ENCODE measurements at regions of chr1 and their contacts with region 1.

Region 1: DNA sequence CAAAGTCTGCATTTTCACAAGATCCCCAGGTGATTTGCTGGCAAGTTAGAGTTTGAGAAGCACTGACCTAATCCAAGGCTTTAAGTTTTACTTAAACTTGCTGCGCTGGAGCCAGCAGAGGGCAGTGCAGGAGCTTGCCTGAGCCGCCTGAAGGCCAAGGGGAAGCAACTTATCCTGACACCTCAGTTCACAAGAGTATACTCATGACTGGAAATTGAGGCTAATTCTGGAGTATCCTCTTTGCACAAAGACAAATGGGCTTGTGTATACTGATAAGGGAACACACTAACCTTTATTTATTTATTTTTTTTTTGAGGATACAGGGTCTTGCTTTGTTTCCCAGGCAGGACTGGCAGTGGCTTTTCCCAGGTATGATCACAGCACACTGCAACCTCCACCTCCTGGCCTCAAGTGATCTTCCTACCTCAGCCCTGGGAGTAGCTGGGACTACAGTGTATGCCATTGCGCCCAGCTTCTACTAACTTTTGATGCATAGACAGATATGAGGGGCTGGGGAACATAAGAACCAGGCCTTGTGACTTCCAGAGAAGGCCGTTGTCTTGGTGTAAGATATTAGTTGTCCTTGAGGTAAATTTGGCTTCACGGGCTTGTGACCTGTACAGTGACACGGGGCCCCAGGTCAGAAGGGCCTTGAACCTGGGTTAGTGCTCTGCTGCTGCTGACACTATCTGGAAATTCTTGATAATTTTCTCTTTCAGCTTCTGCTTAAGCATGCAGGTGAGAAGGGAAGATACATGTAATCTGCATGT is 29.0 kb upstream of the SLAMF1 start:
- DNase-seq: peak; percentile 65 to 80 (median 68)
- H3K4me3 ChIP-seq: no peak overlapping the region
- H3K4me3 Mint-ChIP-seq: peak overlapping the region in 3 of 8 donors; percentile 18 to 64 (median 60)
- H3K27ac ChIP-seq: peak overlapping the region; percentile 47
- H3K27ac Mint-ChIP-seq: peak overlapping the region in 4 of 7 donors; percentile 30 to 94 (median 85)
- H3K4me1 ChIP-seq: peaks cover 49% of the 10 kb centered on the region
- H3K4me1 Mint-ChIP-seq: peaks cover 5 to 22% (median 19%) of the 10 kb centered on the region in 4 donors
- H3K27me3 ChIP-seq: no peaks in the 10 kb centered on the region
- H3K27me3 Mint-ChIP-seq: no peaks in the 10 kb centered on the region

Region 2: GRCh38 chr1:160428655-160429054 is 247.2 kb before region 1 on chr1:
- CTCF ChIA-PET with region 1: interaction called, 12 read pairs
- POLR2A ChIA-PET with region 1: interaction called, 3 read pairs
- intact Hi-C with region 1: no loop called
- DNase-seq: peak in 3 of 5 donors; percentile 41 to 47 (median 41)
- H3K4me3 ChIP-seq: peak overlapping the region in 1 of 2 donors; percentile 11
- H3K4me3 Mint-ChIP-seq: peak overlapping the region; percentile 10 to 74 (median 60)
- H3K27ac ChIP-seq: peak overlapping the region; percentile 57
- H3K27ac Mint-ChIP-seq: peak overlapping the region; percentile 76 to 96 (median 92)
- H3K4me1 ChIP-seq: peaks cover 68% of the 10 kb centered on the region
- H3K4me1 Mint-ChIP-seq: peaks cover 49 to 63% (median 57%) of the 10 kb centered on the region in 4 donors
- H3K27me3 ChIP-seq: no peaks in the 10 kb centered on the region
- H3K27me3 Mint-ChIP-seq: no peaks in the 10 kb centered on the region

Region 3: DNA sequence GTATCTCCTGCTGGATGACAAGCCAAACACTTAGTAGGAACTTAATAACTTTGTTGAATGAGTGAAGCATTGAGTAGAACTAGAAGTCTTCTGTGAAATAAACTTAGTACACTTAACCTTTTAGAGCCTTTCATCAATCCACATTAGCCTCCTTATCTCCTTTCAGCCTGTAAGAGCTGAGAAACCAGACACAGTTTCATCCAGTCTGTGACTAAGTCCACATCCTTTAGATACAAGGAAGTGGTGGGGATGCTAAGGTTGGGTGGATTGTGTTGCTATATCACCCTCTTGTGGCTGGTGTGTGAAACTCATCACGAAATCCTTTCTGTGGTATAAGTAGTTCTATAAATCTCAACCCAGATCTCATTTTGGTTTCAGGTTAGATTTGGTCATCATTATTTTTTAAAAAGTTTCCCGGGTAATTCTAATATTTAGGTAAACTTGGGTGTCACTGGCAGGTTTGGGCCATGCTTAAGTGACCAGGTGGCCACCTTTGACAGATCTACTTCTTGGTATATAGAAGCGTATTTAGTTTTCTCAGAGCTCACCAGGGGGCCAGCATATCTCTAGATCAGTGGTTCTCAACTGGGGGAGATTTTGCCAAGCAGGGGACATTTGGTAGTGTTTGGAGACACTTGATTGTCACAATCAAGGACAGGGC is 68.7 kb before region 1 on chr1:
- CTCF ChIA-PET with region 1: interaction called, 32 read pairs
- POLR2A ChIA-PET with region 1: interaction called, 8 read pairs
- intact Hi-C with region 1: no loop called
- DNase-seq: peak; percentile 79 to 85 (median 81)
- H3K4me3 ChIP-seq: no peak overlapping the region
- H3K4me3 Mint-ChIP-seq: peak overlapping the region in 6 of 8 donors; percentile 3 to 68 (median 37)
- H3K27ac ChIP-seq: peak overlapping the region; percentile 42
- H3K27ac Mint-ChIP-seq: peak overlapping the region; percentile 62 to 93 (median 79)
- H3K4me1 ChIP-seq: peaks cover 56% of the 10 kb centered on the region
- H3K4me1 Mint-ChIP-seq: peaks cover 42 to 62% (median 52%) of the 10 kb centered on the region in 4 donors
- H3K27me3 ChIP-seq: no peaks in the 10 kb centered on the region
- H3K27me3 Mint-ChIP-seq: no peaks in the 10 kb centered on the region

Region 4: GRCh38 chr1:160629286-160630210 is 46.3 kb before region 1 on chr1:
- CTCF ChIA-PET with region 1: interaction called, 139 read pairs
- POLR2A ChIA-PET with region 1: interaction called, 66 read pairs
- intact Hi-C with region 1: loop called (anchors 1 kb)
- DNase-seq: peak; percentile 88 to 94 (median 91)
- H3K4me3 ChIP-seq: peak overlapping the region; percentile 18 to 36
- H3K4me3 Mint-ChIP-seq: peak overlapping the region; percentile 80 to 91 (median 84)
- H3K27ac ChIP-seq: peak overlapping the region; percentile 93
- H3K27ac Mint-ChIP-seq: peak overlapping the region; percentile 87 to 100 (median 99)
- H3K4me1 ChIP-seq: peaks cover 98% of the 10 kb centered on the region
- H3K4me1 Mint-ChIP-seq: peaks cover 82 to 100% (median 93%) of the 10 kb centered on the region in 4 donors
- H3K27me3 ChIP-seq: no peaks in the 10 kb centered on the region
- H3K27me3 Mint-ChIP-seq: no peaks in the 10 kb centered on the region

Region 5: DNA sequence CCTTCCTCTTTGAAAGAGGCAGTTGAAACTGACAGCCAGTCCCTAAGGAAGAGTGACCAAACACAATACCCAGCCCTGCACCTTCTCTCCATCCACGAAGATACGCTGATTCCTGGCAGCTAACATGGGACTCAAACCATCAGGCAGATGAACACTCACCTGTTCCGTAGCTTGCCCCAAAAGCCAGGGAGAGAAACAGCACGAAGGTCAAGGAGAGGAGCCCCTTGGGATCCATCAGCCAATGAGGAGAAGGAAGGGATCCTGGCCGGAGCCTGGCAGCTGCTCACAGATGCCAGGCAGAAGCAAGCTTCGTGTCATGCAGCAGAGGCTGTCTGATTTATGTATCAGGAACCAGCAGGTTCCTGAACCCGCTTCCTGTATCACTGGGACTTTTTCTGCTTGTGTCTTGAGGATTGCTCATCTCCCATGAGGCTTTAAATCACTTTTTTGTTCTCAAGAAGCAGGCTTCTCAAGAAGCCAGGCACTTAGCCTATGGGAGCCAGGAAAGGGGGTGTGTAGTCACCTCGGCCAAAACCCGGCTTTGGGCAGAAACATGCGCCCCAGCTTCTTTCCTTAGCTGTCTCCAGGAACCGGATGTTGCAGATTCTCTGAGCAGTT is 29.0 kb before region 1 on chr1 and contains the start of gene SLAMF1:
- CTCF ChIA-PET with region 1: interaction called, 39 read pairs
- POLR2A ChIA-PET with region 1: interaction called, 82 read pairs
- intact Hi-C with region 1: loop called (anchors 1 kb)
- DNase-seq: peak; percentile 45 to 74 (median 51)
- H3K4me3 ChIP-seq: peak within 1 kb of the TSS; percentile 80 to 97
- H3K4me3 Mint-ChIP-seq: peak within 1 kb of the TSS; percentile 98 to 100 (median 99)
- H3K27ac ChIP-seq: peak within 1 kb of the TSS; percentile 88
- H3K27ac Mint-ChIP-seq: peak within 1 kb of the TSS; percentile 87 to 98 (median 97)
- H3K4me1 ChIP-seq: peaks cover 55% of the 10 kb centered on the region
- H3K4me1 Mint-ChIP-seq: peaks cover 47 to 94% (median 61%) of the 10 kb centered on the region in 4 donors
- H3K27me3 ChIP-seq: no peaks in the 10 kb centered on the region
- H3K27me3 Mint-ChIP-seq: no peaks in the 10 kb centered on the region
- total RNA-seq, gene SLAMF1: 59.8 to 59.9 TPM

Region 6: GRCh38 chr1:160711602-160712311 is 35.9 kb after region 1 on chr1 and contains the start of gene CD48:
- CTCF ChIA-PET with region 1: interaction called, 103 read pairs
- POLR2A ChIA-PET with region 1: interaction called, 85 read pairs
- intact Hi-C with region 1: loop called (anchors 1 kb)
- DNase-seq: peak; percentile 67 to 80 (median 78)
- H3K4me3 ChIP-seq: peak within 1 kb of the TSS; percentile 88 to 96
- H3K4me3 Mint-ChIP-seq: no peak within 1 kb of the TSS
- H3K27ac ChIP-seq: peak within 1 kb of the TSS; percentile 96
- H3K27ac Mint-ChIP-seq: peak within 1 kb of the TSS in 1 of 7 donors; percentile 95
- H3K4me1 ChIP-seq: peaks cover 62% of the 10 kb centered on the region
- H3K4me1 Mint-ChIP-seq: peaks cover 17 to 31% (median 29%) of the 10 kb centered on the region in 4 donors
- H3K27me3 ChIP-seq: no peaks in the 10 kb centered on the region
- H3K27me3 Mint-ChIP-seq: no peaks in the 10 kb centered on the region
- total RNA-seq, gene CD48: 301 to 329 TPM

Region 7: DNA sequence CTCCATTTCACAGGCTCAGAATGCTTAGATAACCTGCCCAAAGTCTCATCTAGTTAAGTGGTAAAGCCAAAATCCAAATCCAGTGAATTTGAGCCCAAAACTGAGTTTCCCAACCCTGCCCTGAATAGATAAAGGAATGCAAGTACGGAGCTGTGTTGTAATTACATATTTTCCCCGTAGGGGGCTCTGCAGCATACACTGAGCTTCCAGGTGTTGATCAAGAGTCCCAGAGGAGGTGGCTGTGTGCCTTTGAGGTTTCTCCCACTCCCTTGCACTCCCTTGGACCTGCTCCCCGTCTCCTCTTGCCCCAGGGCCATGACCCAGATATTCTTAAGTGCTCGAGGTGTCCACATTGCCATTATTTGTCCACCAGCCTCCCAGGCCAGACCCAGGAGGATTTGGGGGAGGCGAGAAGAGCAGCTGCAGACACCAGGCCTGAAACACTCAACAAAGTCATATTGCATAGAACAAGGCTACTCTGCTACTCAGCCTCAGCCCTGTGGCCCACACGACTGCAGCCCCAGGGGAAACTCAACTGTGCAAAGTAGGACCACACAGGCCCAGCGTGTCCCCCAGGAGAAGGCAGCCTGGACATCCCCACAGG is 101.8 kb after region 1 on chr1:
- CTCF ChIA-PET with region 1: interaction called, 27 read pairs
- POLR2A ChIA-PET with region 1: no interaction called
- intact Hi-C with region 1: no loop called
- DNase-seq: peak; percentile 69 to 75 (median 71)
- H3K4me3 ChIP-seq: no peak overlapping the region
- H3K4me3 Mint-ChIP-seq: no peak overlapping the region
- H3K27ac ChIP-seq: no peak overlapping the region
- H3K27ac Mint-ChIP-seq: peak overlapping the region in 3 of 7 donors; percentile 47 to 81 (median 58)
- H3K4me1 ChIP-seq: peaks cover 22% of the 10 kb centered on the region
- H3K4me1 Mint-ChIP-seq: peaks cover 17 to 25% (median 21%) of the 10 kb centered on the region in 4 donors
- H3K27me3 ChIP-seq: no peaks in the 10 kb centered on the region
- H3K27me3 Mint-ChIP-seq: peaks cover 0 to 2% of the 10 kb centered on the region in 2 donors

Region 8: DNA sequence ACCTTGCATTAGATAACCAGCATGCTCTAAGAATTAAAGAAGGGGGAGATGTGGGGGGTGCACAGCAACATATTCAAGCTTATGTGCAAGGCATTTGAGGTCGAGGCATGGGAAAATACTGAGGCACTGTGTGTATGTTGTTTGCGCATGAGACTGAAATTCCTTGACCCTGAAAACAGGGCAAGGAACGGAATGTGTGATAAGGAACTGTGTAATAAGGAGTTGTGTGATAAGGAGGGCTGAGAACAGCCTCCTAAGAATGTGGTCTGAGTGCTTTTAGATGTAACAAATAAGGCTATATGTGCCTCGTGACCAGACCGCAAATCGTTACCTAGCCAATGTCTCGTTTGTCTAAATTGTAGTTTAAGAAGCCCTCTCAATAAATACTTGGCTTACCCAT is 235.6 kb after region 1 on chr1:
- CTCF ChIA-PET with region 1: no interaction called
- POLR2A ChIA-PET with region 1: no interaction called
- intact Hi-C with region 1: no loop called
- DNase-seq: no peak
- H3K4me3 ChIP-seq: no peak overlapping the region
- H3K4me3 Mint-ChIP-seq: no peak overlapping the region
- H3K27ac ChIP-seq: no peak overlapping the region
- H3K27ac Mint-ChIP-seq: no peak overlapping the region
- H3K4me1 ChIP-seq: no peaks in the 10 kb centered on the region
- H3K4me1 Mint-ChIP-seq: no peaks in the 10 kb centered on the region
- H3K27me3 ChIP-seq: no peaks in the 10 kb centered on the region
- H3K27me3 Mint-ChIP-seq: peaks cover 1 to 3% of the 10 kb centered on the region in 2 donors

Measured in CD4-positive, alpha-beta memory T cell (primary cell).